MCF 10A (cell line): ENCODE measurements at regions of chr2 and their contacts with region 1.

Region 1: GRCh38 chr2:11389551-11390528 is 45.4 kb upstream of the ROCK2 start:
- DNase-seq: peak; percentile 73
- H3K4me3 Mint-ChIP-seq: no peak overlapping the region
- H3K27ac Mint-ChIP-seq: peak overlapping the region; percentile 75
- H3K4me1 Mint-ChIP-seq: peaks cover 38% of the 10 kb centered on the region
- H3K27me3 Mint-ChIP-seq: no peaks in the 10 kb centered on the region
- CTCF ChIP-seq: no peak

Region 2: DNA sequence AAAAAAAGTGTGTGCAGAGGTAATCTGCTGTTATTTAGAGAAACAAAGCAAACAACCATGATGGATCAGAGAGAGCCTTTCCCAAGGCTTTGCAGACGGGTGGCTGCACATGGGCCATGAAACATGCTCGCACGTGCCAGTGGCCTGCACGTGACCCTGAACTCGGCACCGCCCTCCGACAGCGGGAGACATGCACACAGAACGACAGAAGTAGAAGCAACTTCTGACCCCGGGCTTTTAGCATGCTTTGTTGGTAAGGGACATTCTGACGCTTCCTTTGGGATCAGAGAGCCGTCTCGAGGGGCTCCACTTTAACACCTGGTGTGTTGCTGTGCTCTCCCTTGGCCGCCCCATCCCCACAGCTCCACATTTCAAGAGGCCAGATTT is 365.6 kb before region 1 on chr2:
- CTCF ChIA-PET with region 1: no interaction called
- POLR2A ChIA-PET with region 1: no interaction called
- intact Hi-C with region 1: no loop called
- DNase-seq: no peak
- H3K4me3 Mint-ChIP-seq: no peak overlapping the region
- H3K27ac Mint-ChIP-seq: no peak overlapping the region
- H3K4me1 Mint-ChIP-seq: no peaks in the 10 kb centered on the region
- H3K27me3 Mint-ChIP-seq: peaks cover 22% of the 10 kb centered on the region
- CTCF ChIP-seq: no peak

Region 3: GRCh38 chr2:11320698-11321492 is 68.9 kb before region 1 on chr2:
- CTCF ChIA-PET with region 1: no interaction called
- POLR2A ChIA-PET with region 1: no interaction called
- intact Hi-C with region 1: no loop called
- DNase-seq: no peak
- H3K4me3 Mint-ChIP-seq: no peak overlapping the region
- H3K27ac Mint-ChIP-seq: no peak overlapping the region
- H3K4me1 Mint-ChIP-seq: no peaks in the 10 kb centered on the region
- H3K27me3 Mint-ChIP-seq: no peaks in the 10 kb centered on the region
- CTCF ChIP-seq: no peak

Region 4: DNA sequence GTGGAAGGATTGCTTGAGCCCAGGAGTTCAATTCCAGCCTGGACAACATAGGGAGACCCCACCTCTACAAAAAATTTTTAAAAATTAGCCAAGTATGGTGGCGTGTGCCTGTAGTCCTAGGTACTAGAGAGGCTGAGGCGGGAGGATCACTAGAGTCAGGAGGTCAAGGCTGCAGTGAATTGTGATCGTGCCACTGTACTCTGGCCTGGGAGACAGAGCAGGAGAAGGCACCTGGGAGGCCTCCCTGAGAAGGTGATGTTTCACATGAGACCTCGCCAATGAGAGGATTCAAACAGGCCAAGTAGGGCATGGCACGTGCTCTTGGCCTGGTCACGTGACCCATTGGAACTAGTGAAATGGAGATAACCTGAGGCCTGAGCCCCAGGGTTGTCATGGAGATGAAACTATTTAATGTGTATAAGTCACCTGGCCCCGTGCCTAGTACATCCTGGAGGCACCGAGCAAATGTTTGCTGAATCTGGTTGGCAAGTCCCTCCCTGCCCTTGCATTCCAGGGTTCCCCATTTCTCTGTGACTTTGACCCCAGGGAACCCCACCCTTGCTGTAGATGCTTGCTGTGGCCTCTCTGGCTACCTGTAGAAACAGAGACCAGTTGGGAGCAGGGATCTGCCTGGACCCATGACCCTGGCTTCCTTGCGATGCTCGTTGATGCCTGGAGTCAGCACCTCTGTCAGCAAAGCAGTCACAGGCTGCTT is 19.3 kb before region 1 on chr2:
- CTCF ChIA-PET with region 1: interaction called, 7 read pairs
- POLR2A ChIA-PET with region 1: interaction called, 26 read pairs
- intact Hi-C with region 1: no loop called
- DNase-seq: peak; percentile 83
- H3K4me3 Mint-ChIP-seq: no peak overlapping the region
- H3K27ac Mint-ChIP-seq: peak overlapping the region; percentile 68
- H3K4me1 Mint-ChIP-seq: peaks cover 38% of the 10 kb centered on the region
- H3K27me3 Mint-ChIP-seq: no peaks in the 10 kb centered on the region
- CTCF ChIP-seq: no peak